Endothelial cell of umbilical vein (primary cell): ENCODE measurements at regions of chr7 and their contacts with region 1.

Region 1: GRCh38 chr7:144437370-144438191 is 34.1 kb upstream of the NOBOX start:
- DNase-seq: peak; percentile 83
- H3K4me3 ChIP-seq: no peak overlapping the region
- H3K27ac ChIP-seq: no peak overlapping the region
- H3K4me1 ChIP-seq: no peaks in the 10 kb centered on the region
- H3K27me3 ChIP-seq: no peaks in the 10 kb centered on the region
- CTCF ChIP-seq: peak; percentile 38 to 42
- POLR2A ChIP-seq: no peak

Region 2: DNA sequence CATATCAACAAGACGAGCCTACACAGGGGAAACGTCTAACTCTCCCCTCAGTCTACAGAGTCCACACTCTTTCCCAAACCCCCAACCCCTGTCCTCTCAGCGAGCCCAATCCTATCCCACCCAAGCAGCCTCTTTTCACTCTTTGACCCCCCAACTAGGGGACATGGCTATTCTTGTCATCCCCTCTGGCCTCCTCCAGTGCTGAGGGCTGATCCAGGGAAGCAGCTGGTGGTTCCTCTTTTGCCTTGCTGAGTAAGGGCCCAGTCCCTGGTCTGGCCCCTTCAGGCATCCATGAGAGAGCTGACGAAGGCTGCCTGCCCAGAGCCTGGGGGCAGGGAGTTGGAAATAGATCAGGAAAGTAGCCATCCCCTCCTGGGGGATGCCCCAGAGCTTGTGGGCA is 40.5 kb before region 1 on chr7:
- CTCF ChIA-PET with region 1: interaction called, 8 read pairs
- POLR2A ChIA-PET with region 1: no interaction called
- dilution Hi-C with region 1: no loop called
- intact Hi-C with region 1: loop called (anchors 5 kb)
- DNase-seq: no peak
- H3K4me3 ChIP-seq: no peak overlapping the region
- H3K27ac ChIP-seq: no peak overlapping the region
- H3K4me1 ChIP-seq: no peaks in the 10 kb centered on the region
- H3K27me3 ChIP-seq: no peaks in the 10 kb centered on the region
- CTCF ChIP-seq: no peak
- POLR2A ChIP-seq: no peak

Region 3: GRCh38 chr7:144892761-144893160 is 455.2 kb after region 1 on chr7:
- CTCF ChIA-PET with region 1: no interaction called
- POLR2A ChIA-PET with region 1: no interaction called
- dilution Hi-C with region 1: no loop called
- intact Hi-C with region 1: no loop called
- DNase-seq: no peak
- H3K4me3 ChIP-seq: no peak overlapping the region
- H3K27ac ChIP-seq: no peak overlapping the region
- H3K4me1 ChIP-seq: no peaks in the 10 kb centered on the region
- H3K27me3 ChIP-seq: no peaks in the 10 kb centered on the region
- CTCF ChIP-seq: no peak
- POLR2A ChIP-seq: no peak